HepG2 (cell line): ENCODE measurements at regions of chr1 and their contacts with region 1.

Region 1: GRCh38 chr1:209627732-209628196 is 24.5 kb downstream of the LAMB3 start:
- DNase-seq: peak; percentile 46
- ATAC-seq: peak; percentile 95
- H3K4me3 ChIP-seq: no peak overlapping the region
- H3K27ac ChIP-seq: no peak overlapping the region
- H3K4me1 ChIP-seq: no peaks in the 10 kb centered on the region
- H3K27me3 ChIP-seq: no peaks in the 10 kb centered on the region; a peak in 1 of 5 replicates
- CTCF ChIP-seq: peak; percentile 93
- EP300 ChIP-seq: no peak
- POLR2A ChIP-seq: no peak
- RAD21 ChIP-seq: peak; percentile 60; the same call in 1 of the 2 replicates

Region 2: DNA sequence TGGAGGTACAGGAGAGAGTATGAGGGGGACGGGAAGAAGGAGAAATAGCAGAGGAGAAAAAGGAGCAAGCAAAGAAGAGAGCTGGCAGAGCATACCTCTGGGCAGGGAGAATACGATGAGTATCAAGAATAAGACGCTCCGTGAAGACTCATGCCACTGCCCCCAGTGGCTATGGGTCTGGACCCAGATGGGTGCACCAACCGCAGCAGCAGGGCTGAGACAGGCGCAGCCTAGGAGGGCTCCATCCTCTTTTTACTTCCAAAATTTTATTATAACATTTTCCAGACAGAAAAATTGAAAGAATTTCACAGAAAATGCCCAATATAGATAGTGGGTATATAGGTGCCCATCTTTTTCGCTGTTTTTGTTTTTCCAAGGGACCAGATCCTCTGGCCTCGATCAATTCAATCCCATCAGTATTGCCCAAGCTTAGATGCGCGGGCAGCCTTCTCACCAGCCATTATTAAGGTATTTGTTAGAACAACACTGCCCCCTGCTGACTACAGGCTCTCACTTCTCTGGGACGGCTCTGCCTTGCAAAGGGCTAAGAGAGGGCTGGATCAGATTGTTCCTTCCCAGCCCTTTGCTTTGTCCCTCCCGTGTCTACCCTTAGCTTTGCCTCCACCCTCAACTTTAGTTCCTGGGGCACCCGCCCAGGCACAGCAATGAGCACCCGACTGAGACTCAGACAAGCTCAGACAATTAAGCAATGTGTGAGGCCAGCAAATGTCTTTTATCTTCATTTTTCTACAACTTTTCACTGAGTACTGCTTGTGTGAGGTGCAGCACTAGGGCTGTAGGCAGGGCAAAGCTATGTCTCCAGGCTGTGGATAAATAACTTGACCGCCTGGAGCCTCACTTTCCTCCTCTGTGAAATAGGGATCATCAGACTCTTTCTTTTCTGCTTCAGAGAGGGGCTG is 61.7 kb before region 1 on chr1:
- CTCF ChIA-PET with region 1: interaction called, 9 read pairs
- POLR2A ChIA-PET with region 1: no interaction called
- in situ Hi-C with region 1: no loop called
- intact Hi-C with region 1: loop called (anchors 2 kb)
- DNase-seq: peak; percentile 68
- ATAC-seq: peak; percentile 97
- H3K4me3 ChIP-seq: no peak overlapping the region
- H3K27ac ChIP-seq: no peak overlapping the region
- H3K4me1 ChIP-seq: no peaks in the 10 kb centered on the region
- H3K27me3 ChIP-seq: no peaks in the 10 kb centered on the region; a peak in 1 of 5 replicates
- CTCF ChIP-seq: peak; percentile 77
- EP300 ChIP-seq: no peak
- POLR2A ChIP-seq: no peak
- RAD21 ChIP-seq: no peak

Region 3: DNA sequence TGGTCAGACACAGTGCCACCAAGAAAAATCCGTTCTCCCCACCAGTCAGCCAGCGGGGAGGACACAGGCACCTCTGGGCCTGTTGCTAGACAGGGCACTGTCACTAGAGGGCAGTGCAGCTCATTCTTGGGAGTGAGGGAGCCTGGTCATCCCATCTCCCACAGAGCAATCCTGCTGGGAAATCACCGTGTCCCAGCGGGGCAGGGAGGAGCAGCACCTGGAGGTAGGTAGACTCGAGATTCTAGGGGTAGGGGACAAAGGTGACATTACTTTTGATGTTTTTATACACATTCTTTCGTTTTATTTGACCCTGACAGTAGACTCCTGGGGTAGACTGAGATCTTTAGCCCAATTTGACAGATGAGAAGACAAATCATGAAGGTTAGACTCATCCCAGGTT is 51.0 kb before region 1 on chr1:
- CTCF ChIA-PET with region 1: interaction called, 14 read pairs
- POLR2A ChIA-PET with region 1: no interaction called
- in situ Hi-C with region 1: no loop called
- intact Hi-C with region 1: loop called (anchors 1 kb)
- DNase-seq: peak; percentile 44
- ATAC-seq: peak; percentile 100
- H3K4me3 ChIP-seq: no peak overlapping the region
- H3K27ac ChIP-seq: no peak overlapping the region
- H3K4me1 ChIP-seq: no peaks in the 10 kb centered on the region
- H3K27me3 ChIP-seq: no peaks in the 10 kb centered on the region
- CTCF ChIP-seq: peak; percentile 91
- EP300 ChIP-seq: no peak
- POLR2A ChIP-seq: no peak
- RAD21 ChIP-seq: no peak

Region 4: GRCh38 chr1:209590405-209590804 is 37.4 kb before region 1 on chr1:
- CTCF ChIA-PET with region 1: interaction called, 5 read pairs
- POLR2A ChIA-PET with region 1: no interaction called
- in situ Hi-C with region 1: no loop called
- intact Hi-C with region 1: loop called (anchors 1 kb)
- DNase-seq: peak; percentile 19
- ATAC-seq: peak; percentile 97
- H3K4me3 ChIP-seq: no peak overlapping the region
- H3K27ac ChIP-seq: no peak overlapping the region
- H3K4me1 ChIP-seq: no peaks in the 10 kb centered on the region
- H3K27me3 ChIP-seq: peaks cover 0 to 5% of the 10 kb centered on the region in 2 experiments; a peak in 1 of 5 replicates
- CTCF ChIP-seq: peak; percentile 55
- EP300 ChIP-seq: no peak
- POLR2A ChIP-seq: no peak
- RAD21 ChIP-seq: peak; percentile 29; the same call in 1 of the 2 replicates

Region 5: DNA sequence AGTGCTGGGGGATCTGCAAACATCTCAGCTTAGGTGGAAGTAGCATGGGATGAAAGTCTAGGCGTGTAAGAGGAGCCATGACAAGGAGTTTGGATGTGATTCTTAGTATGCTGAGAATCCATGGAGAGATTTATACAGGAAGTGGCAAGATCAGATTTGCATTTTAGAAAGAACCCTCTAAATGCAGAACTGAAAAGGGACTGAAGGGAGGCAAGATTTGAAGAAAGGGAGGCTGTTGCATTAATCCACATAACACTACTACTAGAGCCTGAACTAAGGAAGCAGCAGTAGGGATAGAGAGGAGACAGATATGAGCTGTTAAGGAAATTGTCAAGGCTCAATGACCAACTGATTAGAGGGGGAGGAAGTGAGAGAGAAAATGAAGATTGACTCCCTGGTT is 146.8 kb after region 1 on chr1:
- CTCF ChIA-PET with region 1: no interaction called
- POLR2A ChIA-PET with region 1: no interaction called
- in situ Hi-C with region 1: no loop called
- intact Hi-C with region 1: no loop called
- DNase-seq: no peak
- ATAC-seq: no peak
- H3K4me3 ChIP-seq: no peak overlapping the region
- H3K27ac ChIP-seq: no peak overlapping the region
- H3K4me1 ChIP-seq: no peaks in the 10 kb centered on the region
- H3K27me3 ChIP-seq: no peaks in the 10 kb centered on the region
- CTCF ChIP-seq: no peak
- EP300 ChIP-seq: no peak
- POLR2A ChIP-seq: no peak
- RAD21 ChIP-seq: no peak